K562 (cell line): ENCODE measurements at regions of chr5 and their contacts with region 1.

Region 1: GRCh38 chr5:148374692-148375360 is 8.9 kb upstream of the FBXO38 start:
- DNase-seq: peak; percentile 38 to 58 (median 46)
- ATAC-seq: peak; percentile 99
- H3K4me3 ChIP-seq: no peak overlapping the region
- H3K27ac ChIP-seq: no peak overlapping the region
- H3K4me1 ChIP-seq: no peaks in the 10 kb centered on the region
- H3K27me3 ChIP-seq: no peaks in the 10 kb centered on the region; a peak in 1 of 5 replicates
- CTCF ChIP-seq: peak; percentile 66 to 70 (median 68)
- EP300 ChIP-seq: no peak
- POLR2A ChIP-seq: no peak
- RAD21 ChIP-seq: peak; percentile 64 to 87

Region 2: GRCh38 chr5:148179234-148179824 is 195.5 kb before region 1 on chr5:
- CTCF ChIA-PET with region 1: interaction called, 3 read pairs
- POLR2A ChIA-PET with region 1: no interaction called
- in situ Hi-C with region 1: loop called (anchors 10 kb)
- intact Hi-C with region 1: loop called (anchors 1 kb)
- DNase-seq: peak in 3 of 4 experiments; percentile 6 to 67 (median 6)
- ATAC-seq: peak; percentile 67; the same call in 2 of the 3 replicates
- H3K4me3 ChIP-seq: no peak overlapping the region
- H3K27ac ChIP-seq: no peak overlapping the region
- H3K4me1 ChIP-seq: no peaks in the 10 kb centered on the region
- H3K27me3 ChIP-seq: no peaks in the 10 kb centered on the region
- CTCF ChIP-seq: peak; percentile 48 to 71 (median 61); a peak in 5 of 6 replicates
- EP300 ChIP-seq: no peak
- POLR2A ChIP-seq: no peak
- RAD21 ChIP-seq: peak; percentile 89

Region 3: GRCh38 chr5:148186248-148186996 is 188.4 kb before region 1 on chr5:
- CTCF ChIA-PET with region 1: no interaction called
- POLR2A ChIA-PET with region 1: no interaction called
- in situ Hi-C with region 1: loop called (anchors 10 kb)
- intact Hi-C with region 1: no loop called
- DNase-seq: no peak
- ATAC-seq: no peak
- H3K4me3 ChIP-seq: no peak overlapping the region
- H3K27ac ChIP-seq: no peak overlapping the region
- H3K4me1 ChIP-seq: no peaks in the 10 kb centered on the region
- H3K27me3 ChIP-seq: no peaks in the 10 kb centered on the region
- CTCF ChIP-seq: no peak
- EP300 ChIP-seq: no peak
- POLR2A ChIP-seq: no peak
- RAD21 ChIP-seq: no peak

Region 4: DNA sequence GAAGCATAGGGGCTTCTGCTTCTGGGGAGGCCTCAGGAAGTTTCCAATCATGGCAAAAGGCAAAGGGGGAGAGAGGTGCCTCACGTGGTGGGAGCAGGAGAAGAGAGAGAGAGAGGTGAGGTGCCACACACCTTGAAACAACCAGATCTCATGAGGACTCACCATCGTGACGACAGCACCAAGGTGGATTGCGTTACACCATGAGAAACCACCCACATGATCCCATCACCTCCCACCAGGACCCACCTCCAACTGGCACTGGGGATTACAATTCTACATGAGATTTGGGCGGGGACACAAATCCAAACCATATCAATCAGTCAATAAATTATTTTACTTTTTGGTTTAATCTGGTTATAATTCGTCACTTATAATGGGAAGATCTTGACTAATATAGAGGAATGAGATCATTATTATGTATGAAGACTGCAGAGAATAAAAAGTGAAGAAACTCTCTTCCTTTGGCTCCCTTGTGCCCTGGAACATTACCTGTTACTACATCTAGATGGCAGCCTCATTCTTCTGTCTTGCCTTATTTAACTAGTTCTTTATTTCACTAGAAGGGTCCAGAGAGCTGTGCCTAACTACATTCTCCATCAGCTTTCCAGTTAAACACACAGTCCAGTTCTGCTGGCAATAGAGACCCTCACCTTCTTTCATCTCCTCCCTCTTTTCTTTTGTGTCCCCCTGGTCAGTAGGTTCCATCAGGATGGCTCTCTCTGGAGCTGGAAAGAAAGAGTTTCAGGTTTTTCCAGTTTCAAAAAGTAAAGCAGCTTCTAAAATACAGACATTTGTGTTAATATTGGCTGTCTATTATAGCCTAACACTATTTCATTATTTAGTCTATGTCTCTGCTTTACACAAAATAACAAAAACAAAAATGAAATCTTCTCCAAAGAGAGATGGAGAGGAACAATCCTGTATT is 84.3 kb before region 1 on chr5:
- CTCF ChIA-PET with region 1: no interaction called
- POLR2A ChIA-PET with region 1: interaction called, 3 read pairs
- in situ Hi-C with region 1: no loop called
- intact Hi-C with region 1: loop called (anchors 2 kb)
- DNase-seq: peak in 1 of 4 experiments; percentile 9
- ATAC-seq: peak; percentile 69
- H3K4me3 ChIP-seq: no peak overlapping the region
- H3K27ac ChIP-seq: no peak overlapping the region
- H3K4me1 ChIP-seq: no peaks in the 10 kb centered on the region
- H3K27me3 ChIP-seq: no peaks in the 10 kb centered on the region
- CTCF ChIP-seq: peak; percentile 24 to 51 (median 27); a peak in 3 of 6 replicates
- EP300 ChIP-seq: no peak
- POLR2A ChIP-seq: no peak
- RAD21 ChIP-seq: peak; percentile 16 to 75; a peak in 3 of 4 replicates